ENCODE measurements at regions of chr5 and their contacts with region 1.

Region 1: GRCh38 chr5:73591102-73591695 is 25.7 kb downstream of the UTP15 start:
- DNase-seq: peak in 1 of 2 experiments; percentile 62
- H3K4me3 ChIP-seq: no peak overlapping the region
- H3K27ac ChIP-seq: no peak overlapping the region
- H3K4me1 ChIP-seq: no peaks in the 10 kb centered on the region
- H3K27me3 ChIP-seq: no peaks in the 10 kb centered on the region
- CTCF ChIP-seq: peak in 2 of 3 experiments; percentile 67 to 79; a peak in 3 of 4 replicates
- EP300 ChIP-seq: no peak
- POLR2A ChIP-seq: no peak
- RAD21 ChIP-seq: peak; percentile 93

Region 2: GRCh38 chr5:73424556-73424977 is 166.6 kb before region 1 on chr5:
- CTCF ChIA-PET with region 1: no interaction called
- POLR2A ChIA-PET with region 1: no interaction called
- DNase-seq: no peak
- H3K4me3 ChIP-seq: no peak overlapping the region
- H3K27ac ChIP-seq: no peak overlapping the region
- H3K4me1 ChIP-seq: peaks cover 0 to 6% (median 0%) of the 10 kb centered on the region in 4 experiments; a peak in 4 of 7 replicates
- H3K27me3 ChIP-seq: peaks cover 23 to 38% (median 33%) of the 10 kb centered on the region in 4 experiments
- CTCF ChIP-seq: no peak
- EP300 ChIP-seq: no peak
- POLR2A ChIP-seq: no peak
- RAD21 ChIP-seq: no peak

Region 3: DNA sequence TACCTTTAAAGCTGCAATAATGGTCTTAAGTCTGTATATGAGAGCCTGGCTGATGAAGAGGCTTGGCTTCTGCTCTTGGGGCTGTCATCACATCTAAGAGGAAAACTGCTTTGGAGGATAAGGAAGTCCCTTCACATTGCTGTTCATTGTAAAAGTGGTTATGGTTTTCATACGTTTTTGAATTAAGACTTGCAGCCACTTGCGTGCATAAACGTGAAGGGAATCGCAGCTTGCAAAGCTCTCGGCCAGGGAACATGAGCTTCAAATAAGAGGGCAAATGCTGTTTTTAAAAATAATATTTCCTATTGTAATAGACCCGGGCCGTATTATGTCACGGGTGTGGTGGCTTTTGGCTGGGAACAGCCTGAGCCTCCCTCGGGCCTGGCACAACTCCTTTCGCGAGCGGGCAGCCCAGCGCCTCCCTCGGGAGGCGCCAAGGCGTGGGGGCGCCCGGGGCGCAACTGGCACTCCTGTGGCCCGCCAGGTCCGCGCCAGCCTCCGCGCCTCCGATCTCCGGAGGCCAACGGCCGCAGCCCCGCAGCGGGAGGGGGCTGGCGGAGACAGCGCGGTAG is 34.3 kb after region 1 on chr5:
- CTCF ChIA-PET with region 1: interaction called, 24 read pairs
- POLR2A ChIA-PET with region 1: no interaction called
- DNase-seq: peak in 1 of 2 experiments; percentile 15
- H3K4me3 ChIP-seq: peak overlapping the region; percentile 23 to 79 (median 32); a peak in 6 of 8 replicates
- H3K27ac ChIP-seq: no peak overlapping the region
- H3K4me1 ChIP-seq: peaks cover 0 to 11% (median 1%) of the 10 kb centered on the region in 4 experiments; a peak in 2 of 7 replicates
- H3K27me3 ChIP-seq: peaks cover 8 to 20% (median 14%) of the 10 kb centered on the region in 4 experiments
- CTCF ChIP-seq: no peak
- EP300 ChIP-seq: peak in 1 of 2 experiments; percentile 46; a peak in 1 of 3 replicates
- POLR2A ChIP-seq: no peak
- RAD21 ChIP-seq: no peak

Region 4: DNA sequence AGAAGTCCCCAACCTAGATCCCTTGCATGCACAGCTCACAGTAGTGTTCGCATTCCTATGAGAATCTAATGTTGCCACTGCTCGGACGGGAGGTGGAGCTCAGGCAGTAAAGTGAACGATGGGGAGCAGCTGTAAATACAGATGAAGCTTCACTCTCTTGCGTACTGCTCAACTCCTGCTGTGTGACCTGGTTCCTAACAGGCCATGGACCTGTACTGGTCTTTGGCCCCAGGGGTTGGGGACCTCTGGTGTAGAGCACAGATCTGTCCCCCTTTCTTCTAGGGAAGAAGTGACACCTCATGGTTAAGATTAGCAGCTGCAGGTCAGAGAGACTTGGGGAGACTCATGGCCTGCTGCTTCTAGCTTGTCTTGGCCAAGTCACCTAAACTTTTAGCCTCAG is 41.9 kb after region 1 on chr5:
- CTCF ChIA-PET with region 1: interaction called, 21 read pairs
- POLR2A ChIA-PET with region 1: no interaction called
- DNase-seq: no peak
- H3K4me3 ChIP-seq: no peak overlapping the region
- H3K27ac ChIP-seq: no peak overlapping the region
- H3K4me1 ChIP-seq: no peaks in the 10 kb centered on the region
- H3K27me3 ChIP-seq: peaks cover 0 to 3% (median 0%) of the 10 kb centered on the region in 4 experiments; a peak in 2 of 7 replicates
- CTCF ChIP-seq: peak in 2 of 3 experiments; percentile 34 to 46; a peak in 3 of 4 replicates
- EP300 ChIP-seq: no peak
- POLR2A ChIP-seq: no peak
- RAD21 ChIP-seq: peak; percentile 28 to 61

Region 5: DNA sequence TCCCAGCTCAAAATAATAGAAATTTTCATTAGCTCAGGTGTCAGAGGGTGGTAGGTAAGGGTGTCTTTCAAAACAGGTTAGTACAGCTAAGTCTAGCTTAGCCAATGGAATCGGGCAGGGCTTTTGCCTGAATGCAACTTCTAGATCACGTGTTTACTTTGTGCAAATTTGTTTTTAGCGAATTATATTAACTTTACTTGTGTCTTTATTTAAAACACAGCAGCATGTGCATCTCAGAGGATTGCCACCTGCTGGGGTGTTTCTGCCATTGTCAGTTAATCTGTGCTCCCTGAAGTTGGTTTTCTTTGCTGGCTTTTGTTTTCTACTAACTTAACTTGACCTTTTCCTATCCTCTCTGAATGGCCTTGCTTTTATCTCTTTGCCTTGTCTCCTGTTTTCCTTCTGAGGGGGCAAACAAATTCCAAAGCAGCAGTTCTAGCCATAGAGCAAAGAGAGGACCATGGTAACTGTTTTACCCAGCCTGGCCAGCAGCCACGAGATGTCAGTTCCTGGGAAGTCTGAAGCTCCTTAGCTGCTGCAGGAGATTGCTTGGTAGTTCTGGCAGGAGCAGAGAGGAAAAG is 102.4 kb after region 1 on chr5:
- CTCF ChIA-PET with region 1: interaction called, 12 read pairs
- POLR2A ChIA-PET with region 1: no interaction called
- DNase-seq: peak in 1 of 2 experiments; percentile 7
- H3K4me3 ChIP-seq: no peak overlapping the region
- H3K27ac ChIP-seq: no peak overlapping the region
- H3K4me1 ChIP-seq: peaks cover 2 to 8% (median 5%) of the 10 kb centered on the region in 4 experiments; a peak in 4 of 7 replicates
- H3K27me3 ChIP-seq: no peaks in the 10 kb centered on the region; a peak in 1 of 7 replicates
- CTCF ChIP-seq: peak in 1 of 3 experiments; percentile 25; a peak in 1 of 4 replicates
- EP300 ChIP-seq: no peak
- POLR2A ChIP-seq: no peak
- RAD21 ChIP-seq: no peak; a peak in 1 of 4 replicates

Region 6: GRCh38 chr5:73751254-73751914 is 160.2 kb after region 1 on chr5:
- CTCF ChIA-PET with region 1: interaction called, 11 read pairs
- POLR2A ChIA-PET with region 1: no interaction called
- DNase-seq: no peak
- H3K4me3 ChIP-seq: no peak overlapping the region
- H3K27ac ChIP-seq: no peak overlapping the region
- H3K4me1 ChIP-seq: peaks cover 0 to 2% (median 0%) of the 10 kb centered on the region in 4 experiments; a peak in 1 of 7 replicates
- H3K27me3 ChIP-seq: no peaks in the 10 kb centered on the region
- CTCF ChIP-seq: no peak
- EP300 ChIP-seq: no peak
- POLR2A ChIP-seq: no peak
- RAD21 ChIP-seq: no peak

Region 7: GRCh38 chr5:73792687-73793320 is 201.6 kb after region 1 on chr5:
- CTCF ChIA-PET with region 1: interaction called, 254 read pairs
- POLR2A ChIA-PET with region 1: no interaction called
- DNase-seq: peak; percentile 46 to 86
- H3K4me3 ChIP-seq: no peak overlapping the region
- H3K27ac ChIP-seq: no peak overlapping the region
- H3K4me1 ChIP-seq: peaks cover 0 to 5% (median 0%) of the 10 kb centered on the region in 4 experiments; a peak in 1 of 7 replicates
- H3K27me3 ChIP-seq: peaks cover 0 to 1% (median 0%) of the 10 kb centered on the region in 4 experiments; a peak in 1 of 7 replicates
- CTCF ChIP-seq: peak; percentile 88 to 96 (median 96)
- EP300 ChIP-seq: no peak
- POLR2A ChIP-seq: no peak
- RAD21 ChIP-seq: peak; percentile 98

Region 8: DNA sequence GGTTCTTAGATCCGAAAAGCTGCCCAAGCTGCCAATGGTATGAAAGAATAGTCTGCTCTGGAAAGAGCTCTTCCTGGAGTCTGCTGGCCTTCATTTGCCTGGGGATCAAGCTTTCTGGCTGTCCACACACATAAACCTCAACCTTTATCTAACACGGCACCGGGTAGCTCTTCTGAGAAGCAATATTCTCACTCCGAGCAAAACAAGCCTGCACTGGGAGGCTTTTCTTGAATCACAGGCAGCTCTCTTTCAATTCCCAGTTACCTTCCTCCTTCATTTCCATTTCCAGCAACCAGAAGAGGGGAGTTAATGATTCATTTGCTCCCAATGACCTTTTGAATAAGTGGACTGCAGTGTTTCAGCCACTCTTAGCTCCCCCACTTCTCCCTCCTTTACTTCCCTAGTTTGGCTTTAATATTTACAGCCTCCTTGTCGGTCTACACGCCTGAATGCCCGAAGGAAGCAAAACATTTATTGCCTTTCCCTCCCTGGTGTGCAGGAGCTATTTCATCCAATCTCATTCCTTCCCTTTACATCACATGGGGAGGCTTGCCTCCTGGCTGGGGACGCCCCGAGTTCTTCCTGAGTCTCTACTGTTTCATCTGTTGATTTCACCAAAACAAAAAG is 221.9 kb after region 1 on chr5:
- CTCF ChIA-PET with region 1: interaction called, 10 read pairs
- POLR2A ChIA-PET with region 1: no interaction called
- DNase-seq: no peak
- H3K4me3 ChIP-seq: no peak overlapping the region
- H3K27ac ChIP-seq: no peak overlapping the region
- H3K4me1 ChIP-seq: 0 out of 7 replicates have a peak, but pooled peaks cover 0 to 2% (median 0%) of the 10 kb centered on the region in 4 experiments
- H3K27me3 ChIP-seq: no peaks in the 10 kb centered on the region
- CTCF ChIP-seq: no peak
- EP300 ChIP-seq: no peak
- POLR2A ChIP-seq: no peak
- RAD21 ChIP-seq: no peak

Region 9: DNA sequence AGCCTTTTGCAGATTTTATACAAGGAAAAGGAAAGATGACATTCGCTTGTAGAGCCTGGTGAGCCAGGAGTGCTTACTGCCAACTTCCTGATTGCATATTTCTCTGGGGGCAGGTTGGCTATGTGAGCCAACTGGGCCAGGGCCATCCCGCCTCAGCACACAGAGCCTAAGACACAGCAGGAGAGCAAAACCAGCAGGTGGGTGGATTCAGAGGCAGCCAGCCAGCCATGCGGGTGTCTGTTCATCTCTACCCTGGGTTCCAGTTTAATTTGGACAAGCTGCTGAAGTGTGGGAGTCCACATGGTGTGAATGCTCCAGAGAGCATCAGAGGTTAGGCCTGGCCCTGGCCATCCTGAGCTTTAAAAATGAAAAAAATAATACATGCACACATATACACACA is 326.2 kb after region 1 on chr5:
- CTCF ChIA-PET with region 1: no interaction called
- POLR2A ChIA-PET with region 1: no interaction called
- DNase-seq: no peak
- H3K4me3 ChIP-seq: no peak overlapping the region
- H3K27ac ChIP-seq: no peak overlapping the region
- H3K4me1 ChIP-seq: no peaks in the 10 kb centered on the region
- H3K27me3 ChIP-seq: no peaks in the 10 kb centered on the region
- CTCF ChIP-seq: no peak
- EP300 ChIP-seq: no peak
- POLR2A ChIP-seq: no peak
- RAD21 ChIP-seq: no peak